Heart right ventricle (tissue), 16 donors: ENCODE measurements at regions of chr7 and their contacts with region 1.

Region 1: GRCh38 chr7:127514499-127514898 is 70.9 kb downstream of the GCC1 start:
- DNase-seq: no peak
- ATAC-seq: peak in 3 of 8 donors; percentile 44 to 67 (median 50)
- H3K4me3 ChIP-seq: no peak overlapping the region
- H3K27ac ChIP-seq: no peak overlapping the region
- H3K4me1 ChIP-seq: no peaks in the 10 kb centered on the region
- H3K27me3 ChIP-seq: peaks cover 0 to 25% (median 12%) of the 10 kb centered on the region in 7 donors
- CTCF ChIP-seq: peak in 7 of 9 donors; percentile 26 to 57 (median 44)

Region 2: DNA sequence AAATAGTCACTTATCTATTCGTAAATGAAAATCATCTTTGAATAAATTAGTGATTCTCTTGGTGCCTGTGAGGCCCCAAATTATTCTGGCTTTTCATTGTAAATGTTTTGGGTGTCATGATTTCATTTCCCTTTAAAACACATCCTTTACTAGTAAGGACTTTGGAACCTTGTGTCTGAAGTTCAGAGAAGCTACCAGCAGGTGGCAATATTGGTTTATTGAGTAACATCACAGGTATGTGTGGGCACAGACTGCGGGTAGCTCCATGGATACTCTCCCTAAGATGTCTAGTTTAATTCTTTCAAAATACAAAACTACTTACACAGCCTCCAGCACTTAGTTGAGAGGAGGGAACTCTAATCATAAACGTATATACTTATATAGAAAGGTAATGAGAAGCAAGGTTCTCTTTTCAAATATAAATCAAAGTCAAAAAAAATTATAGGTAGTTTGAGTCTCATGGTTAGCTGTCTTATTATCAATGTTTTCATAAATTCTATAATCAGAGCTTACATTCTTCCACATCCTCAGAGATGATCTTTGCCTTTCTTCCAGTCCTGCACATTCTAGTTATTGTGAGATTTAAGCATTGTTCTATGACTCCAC is 711.3 kb before region 1 on chr7:
- intact Hi-C with region 1: loop called in 3 of 10 experiments (anchors 5 to 10 kb)
- DNase-seq: peak in 1 of 2 donors; percentile 28
- ATAC-seq: peak in 1 of 8 donors; percentile 44
- H3K4me3 ChIP-seq: no peak overlapping the region
- H3K27ac ChIP-seq: no peak overlapping the region
- H3K4me1 ChIP-seq: no peaks in the 10 kb centered on the region
- H3K27me3 ChIP-seq: peaks cover 0 to 7% (median 0%) of the 10 kb centered on the region in 7 donors
- CTCF ChIP-seq: peak; percentile 31 to 67 (median 56)